ENCODE measurements at regions of chr6 and their contacts with region 1.

Region 1: GRCh38 chr6:29649701-29650673 is 6.9 kb upstream of the MOG start:
- DNase-seq: peak; percentile 99
- ATAC-seq: peak; percentile 97
- H3K4me3 Mint-ChIP-seq: peak overlapping the region; percentile 90
- H3K27ac Mint-ChIP-seq: peak overlapping the region; percentile 99
- H3K4me1 Mint-ChIP-seq: peaks cover 11% of the 10 kb centered on the region
- H3K27me3 Mint-ChIP-seq: peaks cover under 1% of the 10 kb centered on the region

Region 2: GRCh38 chr6:29345380-29345779 is 304.6 kb before region 1 on chr6:
- CTCF ChIA-PET with region 1: no interaction called
- DNase-seq: no peak
- ATAC-seq: no peak
- H3K4me3 Mint-ChIP-seq: no peak overlapping the region
- H3K27ac Mint-ChIP-seq: no peak overlapping the region
- H3K4me1 Mint-ChIP-seq: no peaks in the 10 kb centered on the region
- H3K27me3 Mint-ChIP-seq: peaks cover 10% of the 10 kb centered on the region

Region 3: GRCh38 chr6:29597184-29597583 is 52.8 kb before region 1 on chr6:
- CTCF ChIA-PET with region 1: no interaction called
- DNase-seq: no peak
- ATAC-seq: no peak
- H3K4me3 Mint-ChIP-seq: no peak overlapping the region
- H3K27ac Mint-ChIP-seq: no peak overlapping the region
- H3K4me1 Mint-ChIP-seq: no peaks in the 10 kb centered on the region
- H3K27me3 Mint-ChIP-seq: peaks cover 17% of the 10 kb centered on the region

Region 4: DNA sequence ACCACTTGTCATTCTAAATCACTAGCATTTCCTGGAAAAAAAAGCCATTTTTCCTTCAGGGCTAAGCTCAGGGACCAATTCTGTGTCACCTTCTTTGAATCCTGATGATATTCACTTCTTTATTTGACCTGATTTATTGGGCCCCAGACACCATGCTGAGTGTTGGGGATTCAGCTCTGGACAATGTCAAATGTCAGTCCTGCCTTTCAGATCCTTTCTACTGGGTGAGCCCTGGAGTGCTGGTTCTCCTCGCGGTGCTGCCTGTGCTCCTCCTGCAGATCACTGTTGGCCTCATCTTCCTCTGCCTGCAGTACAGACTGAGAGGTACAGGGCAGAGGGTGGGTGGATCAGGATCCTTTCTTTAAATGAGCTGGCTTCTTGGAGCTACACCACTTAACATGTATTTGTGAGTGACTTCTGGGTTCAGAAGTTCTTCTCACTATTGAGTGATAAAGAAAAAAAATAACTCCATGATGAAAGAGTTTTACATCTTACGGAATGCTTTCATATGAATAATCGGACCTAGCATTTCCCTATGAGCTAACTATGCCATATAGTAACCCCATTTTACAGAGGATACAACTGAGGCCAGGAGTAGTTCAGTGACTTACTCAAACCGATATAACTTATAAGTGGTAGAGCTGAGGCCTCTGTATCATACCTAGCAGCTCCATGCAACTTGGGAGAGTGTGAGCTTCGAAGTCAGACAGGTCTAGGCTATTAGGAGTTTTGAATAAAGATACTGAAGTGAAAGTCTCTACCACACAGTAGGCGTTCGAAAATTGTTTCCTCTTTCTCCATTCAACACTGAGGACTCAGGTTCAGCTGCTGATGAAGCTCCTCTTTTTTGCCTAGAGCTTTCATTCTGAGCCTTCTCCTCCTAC is 16.2 kb after region 1 on chr6:
- CTCF ChIA-PET with region 1: interaction called, 117 read pairs
- DNase-seq: no peak
- ATAC-seq: no peak
- H3K4me3 Mint-ChIP-seq: no peak overlapping the region
- H3K27ac Mint-ChIP-seq: no peak overlapping the region
- H3K4me1 Mint-ChIP-seq: no peaks in the 10 kb centered on the region
- H3K27me3 Mint-ChIP-seq: peaks cover 17% of the 10 kb centered on the region

Region 5: GRCh38 chr6:29696155-29697125 is 46.5 kb after region 1 on chr6:
- CTCF ChIA-PET with region 1: interaction called, 76 read pairs
- DNase-seq: peak; percentile 47
- ATAC-seq: no peak
- H3K4me3 Mint-ChIP-seq: no peak overlapping the region
- H3K27ac Mint-ChIP-seq: no peak overlapping the region
- H3K4me1 Mint-ChIP-seq: no peaks in the 10 kb centered on the region
- H3K27me3 Mint-ChIP-seq: peaks cover 14% of the 10 kb centered on the region

Region 6: GRCh38 chr6:29730575-29731126 is 80.7 kb after region 1 on chr6:
- CTCF ChIA-PET with region 1: interaction called, 11 read pairs
- DNase-seq: no peak
- ATAC-seq: no peak
- H3K4me3 Mint-ChIP-seq: no peak overlapping the region
- H3K27ac Mint-ChIP-seq: no peak overlapping the region
- H3K4me1 Mint-ChIP-seq: peaks cover 41% of the 10 kb centered on the region
- H3K27me3 Mint-ChIP-seq: no peaks in the 10 kb centered on the region

Region 7: GRCh38 chr6:29834564-29835436 is 184.8 kb after region 1 on chr6:
- CTCF ChIA-PET with region 1: interaction called, 10 read pairs
- DNase-seq: peak; percentile 64
- ATAC-seq: peak; percentile 68
- H3K4me3 Mint-ChIP-seq: no peak overlapping the region
- H3K27ac Mint-ChIP-seq: no peak overlapping the region
- H3K4me1 Mint-ChIP-seq: peaks cover 11% of the 10 kb centered on the region
- H3K27me3 Mint-ChIP-seq: peaks cover 77% of the 10 kb centered on the region